ENCODE measurements at regions of chr7 and their contacts with region 1.

Region 1: GRCh38 chr7:25862260-25863037 is 289.5 kb upstream of the NFE2L3 start:
- H3K4me3 ChIP-seq: no peak overlapping the region
- H3K27ac ChIP-seq: peak overlapping the region; percentile 59
- H3K4me1 ChIP-seq: peaks cover 22% of the 10 kb centered on the region
- CTCF ChIP-seq: no peak

Region 2: GRCh38 chr7:25775999-25776743 is 86.3 kb before region 1 on chr7:
- CTCF ChIA-PET with region 1: no interaction called
- POLR2A ChIA-PET with region 1: no interaction called
- H3K4me3 ChIP-seq: no peak overlapping the region
- H3K27ac ChIP-seq: no peak overlapping the region
- H3K4me1 ChIP-seq: peaks cover 13% of the 10 kb centered on the region
- CTCF ChIP-seq: no peak

Region 3: DNA sequence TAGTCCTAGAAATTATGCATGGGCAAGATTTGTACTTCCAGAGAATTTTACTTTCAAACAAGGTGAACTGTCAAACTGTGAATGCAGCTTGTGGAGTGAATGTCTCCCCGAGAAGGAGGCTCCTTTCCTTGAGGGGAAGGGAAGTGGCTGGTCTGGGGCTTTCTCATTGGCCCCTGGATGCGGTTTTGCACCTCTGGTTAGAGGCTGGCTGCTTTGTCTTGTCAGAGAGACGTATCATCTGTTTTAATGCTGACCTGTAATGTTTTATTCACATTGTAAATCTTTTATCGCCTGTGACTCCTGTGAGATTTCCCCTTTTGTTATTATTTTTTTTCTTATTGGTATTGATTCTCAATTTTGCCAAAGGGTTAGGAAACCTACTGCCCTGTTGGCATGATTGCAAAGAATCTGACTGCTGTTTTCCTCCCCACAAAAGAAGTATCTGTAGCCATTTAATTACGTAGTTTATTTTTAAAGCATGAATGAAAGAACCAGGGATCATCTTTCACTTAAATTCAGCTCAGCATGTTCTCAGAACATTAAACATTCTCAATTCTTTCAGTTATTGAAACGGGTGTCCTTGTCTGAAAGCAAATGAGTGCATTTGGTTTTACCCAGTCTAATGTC is 51.3 kb after region 1 on chr7:
- CTCF ChIA-PET with region 1: no interaction called
- POLR2A ChIA-PET with region 1: no interaction called
- H3K4me3 ChIP-seq: no peak overlapping the region
- H3K27ac ChIP-seq: no peak overlapping the region
- H3K4me1 ChIP-seq: peaks cover 11% of the 10 kb centered on the region
- CTCF ChIP-seq: no peak

Region 4: GRCh38 chr7:27172823-27173510 is 1310.5 kb after region 1 on chr7:
- CTCF ChIA-PET with region 1: no interaction called
- POLR2A ChIA-PET with region 1: interaction called, 28 read pairs
- H3K4me3 ChIP-seq: peak overlapping the region; percentile 76
- H3K27ac ChIP-seq: peak overlapping the region; percentile 100
- H3K4me1 ChIP-seq: peaks cover 10% of the 10 kb centered on the region
- CTCF ChIP-seq: no peak